ENCODE measurements at regions of chr12 and their contacts with region 1.

Region 1: DNA sequence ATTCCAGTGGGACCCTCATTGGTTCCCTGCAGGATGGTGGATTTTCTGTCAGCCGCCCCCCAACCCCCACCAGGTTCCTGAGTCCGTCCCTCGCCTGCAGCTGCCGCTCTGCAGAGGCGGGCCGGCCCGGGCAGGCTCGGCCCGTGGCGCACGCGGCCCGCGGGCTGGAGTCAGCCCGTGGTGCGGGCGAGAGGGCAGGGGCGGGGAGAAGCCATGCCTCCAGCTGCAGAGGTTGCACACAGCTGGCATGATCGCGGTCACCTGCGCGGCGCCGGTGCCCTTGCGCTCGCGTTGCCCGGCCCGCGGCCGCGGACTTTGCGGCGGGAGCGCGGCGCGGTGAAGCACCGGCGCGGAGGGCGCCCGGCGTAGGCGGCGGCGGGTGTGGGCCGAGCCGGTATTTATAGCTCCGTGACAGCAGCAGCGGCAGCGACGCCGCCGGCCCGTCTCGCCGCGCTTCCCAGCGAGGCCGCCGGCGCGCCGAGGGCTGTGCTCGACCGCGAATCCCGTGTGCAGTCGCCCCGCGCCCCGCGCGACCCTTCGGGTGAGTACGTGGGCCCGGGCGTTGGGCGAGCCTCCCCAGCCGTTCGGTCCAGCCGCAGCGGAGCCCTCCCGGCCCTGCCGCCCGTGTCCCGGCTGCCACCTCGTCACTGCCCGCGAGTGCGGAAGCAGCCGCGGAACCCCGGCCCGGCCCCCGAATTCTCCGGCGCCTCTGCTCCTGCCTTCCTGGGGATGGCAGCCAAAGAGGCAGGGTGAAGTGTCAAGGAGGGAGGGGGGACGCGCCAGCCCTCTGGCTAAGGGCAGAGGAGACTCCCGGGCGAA is at the start of gene TMEM117:
- H3K4me3 ChIP-seq: peak within 1 kb of the TSS; percentile 68
- H3K27ac ChIP-seq: peak within 1 kb of the TSS; percentile 78
- H3K4me1 ChIP-seq: no peaks in the 10 kb centered on the region
- CTCF ChIP-seq: no peak

Region 2: GRCh38 chr12:43696154-43696553 is 139.7 kb before region 1 on chr12:
- CTCF ChIA-PET with region 1: no interaction called
- POLR2A ChIA-PET with region 1: no interaction called
- H3K4me3 ChIP-seq: no peak overlapping the region
- H3K27ac ChIP-seq: no peak overlapping the region
- H3K4me1 ChIP-seq: no peaks in the 10 kb centered on the region
- CTCF ChIP-seq: no peak

Region 3: GRCh38 chr12:43805860-43806736 is 29.8 kb before region 1 on chr12 and contains the start of gene TWF1:
- CTCF ChIA-PET with region 1: interaction called, 3 read pairs
- POLR2A ChIA-PET with region 1: interaction called, 19 read pairs
- H3K4me3 ChIP-seq: peak within 1 kb of the TSS; percentile 93
- H3K27ac ChIP-seq: peak within 1 kb of the TSS; percentile 89
- H3K4me1 ChIP-seq: peaks cover 4% of the 10 kb centered on the region
- CTCF ChIP-seq: peak; percentile 53; the same call in 1 of the 2 replicates